ENCODE measurements at regions of chr2 and their contacts with region 1.

Region 1: GRCh38 chr2:225670111-225670974 is 270.8 kb downstream of the NYAP2 start:
- DNase-seq: peak in 2 of 5 donors; percentile 31 to 64
- H3K4me3 ChIP-seq: no peak overlapping the region
- H3K27ac ChIP-seq: no peak overlapping the region
- H3K4me1 ChIP-seq: no peaks in the 10 kb centered on the region
- H3K27me3 ChIP-seq: no peaks in the 10 kb centered on the region
- CTCF ChIP-seq: peak; percentile 34

Region 2: DNA sequence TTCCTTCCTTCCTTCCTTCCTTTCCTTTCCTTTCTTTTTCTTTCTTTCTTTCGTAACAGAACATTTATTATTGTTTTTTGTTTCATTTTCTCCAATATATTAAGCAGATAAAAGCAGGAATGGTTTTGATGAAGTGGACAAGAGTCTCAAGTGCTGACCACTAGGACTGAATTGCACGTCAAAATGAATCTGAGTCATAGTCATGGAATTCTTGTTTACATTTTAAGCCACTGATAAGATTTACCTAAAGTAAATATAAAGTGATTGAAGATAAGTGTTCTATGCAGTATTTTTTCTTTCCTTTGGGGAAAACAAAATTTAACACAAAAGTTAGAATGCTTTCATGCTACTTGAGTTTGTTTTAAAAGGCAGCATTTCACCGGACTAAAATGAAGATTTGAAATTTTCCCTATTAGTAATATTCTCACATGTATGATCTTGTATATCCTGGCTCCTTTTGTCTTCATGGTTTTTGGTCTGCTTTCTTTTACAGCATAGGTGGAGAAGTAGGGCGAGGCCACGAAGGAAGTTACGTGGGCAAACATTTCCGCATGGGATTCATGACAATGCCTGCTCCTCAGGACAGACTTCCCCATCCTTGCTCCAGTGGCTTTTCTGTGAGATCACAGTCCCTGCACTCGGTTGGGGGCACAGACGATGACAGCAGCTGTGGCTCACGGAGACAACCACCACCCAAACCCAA is 157.3 kb before region 1 on chr2:
- intact Hi-C with region 1: no loop called
- DNase-seq: no peak
- H3K4me3 ChIP-seq: no peak overlapping the region
- H3K27ac ChIP-seq: no peak overlapping the region
- H3K4me1 ChIP-seq: no peaks in the 10 kb centered on the region
- H3K27me3 ChIP-seq: no peaks in the 10 kb centered on the region
- CTCF ChIP-seq: no peak

Region 3: GRCh38 chr2:226813148-226813701 is 1142.9 kb after region 1 on chr2:
- intact Hi-C with region 1: loop called (anchors 10 kb)
- DNase-seq: no peak
- H3K4me3 ChIP-seq: no peak overlapping the region
- H3K27ac ChIP-seq: no peak overlapping the region
- H3K4me1 ChIP-seq: no peaks in the 10 kb centered on the region
- H3K27me3 ChIP-seq: no peaks in the 10 kb centered on the region
- CTCF ChIP-seq: no peak